ENCODE measurements at regions of chr6 and their contacts with region 1.

Region 1: GRCh38 chr6:169701954-169702839 is at the starts of genes C6orf120 and WDR27:
- DNase-seq: peak; percentile 95 to 98 (median 96)
- H3K4me3 ChIP-seq: peak within 1 kb of the TSS; percentile 95
- H3K4me3 Mint-ChIP-seq: peak within 1 kb of the TSS; percentile 88 to 96 (median 93)
- H3K27ac ChIP-seq: peak within 1 kb of the TSS; percentile 97
- H3K27ac Mint-ChIP-seq: peak within 1 kb of the TSS; percentile 94 to 97 (median 96)
- H3K4me1 ChIP-seq: peaks cover 46% of the 10 kb centered on the region
- H3K4me1 Mint-ChIP-seq: peaks cover 49 to 58% (median 55%) of the 10 kb centered on the region in 3 donors
- H3K27me3 ChIP-seq: no peaks in the 10 kb centered on the region
- H3K27me3 Mint-ChIP-seq: peaks cover 0 to 2% of the 10 kb centered on the region in 2 donors
- total RNA-seq, gene C6orf120: 23.6 to 25.5 TPM
- total RNA-seq, gene WDR27: 24.5 to 29.4 TPM

Region 2: GRCh38 chr6:169604076-169604475 is 98.1 kb before region 1 on chr6:
- CTCF ChIA-PET with region 1: no interaction called
- POLR2A ChIA-PET with region 1: no interaction called
- DNase-seq: no peak
- H3K4me3 ChIP-seq: no peak overlapping the region
- H3K4me3 Mint-ChIP-seq: no peak overlapping the region
- H3K27ac ChIP-seq: no peak overlapping the region
- H3K27ac Mint-ChIP-seq: no peak overlapping the region
- H3K4me1 ChIP-seq: no peaks in the 10 kb centered on the region
- H3K4me1 Mint-ChIP-seq: no peaks in the 10 kb centered on the region
- H3K27me3 ChIP-seq: no peaks in the 10 kb centered on the region
- H3K27me3 Mint-ChIP-seq: peaks cover 0 to 2% of the 10 kb centered on the region in 2 donors

Region 3: GRCh38 chr6:169723200-169723909 is 21.2 kb after region 1 on chr6:
- CTCF ChIA-PET with region 1: interaction called, 12 read pairs
- POLR2A ChIA-PET with region 1: interaction called, 69 read pairs
- DNase-seq: peak; percentile 54 to 82 (median 75)
- H3K4me3 ChIP-seq: peak overlapping the region; percentile 75
- H3K4me3 Mint-ChIP-seq: peak overlapping the region; percentile 87 to 99 (median 90)
- H3K27ac ChIP-seq: peak overlapping the region; percentile 81
- H3K27ac Mint-ChIP-seq: peak overlapping the region; percentile 90 to 99 (median 94)
- H3K4me1 ChIP-seq: peaks cover 42% of the 10 kb centered on the region
- H3K4me1 Mint-ChIP-seq: peaks cover 42 to 64% (median 56%) of the 10 kb centered on the region in 3 donors
- H3K27me3 ChIP-seq: no peaks in the 10 kb centered on the region
- H3K27me3 Mint-ChIP-seq: no peaks in the 10 kb centered on the region

Region 4: GRCh38 chr6:169738204-169738975 is 36.2 kb after region 1 on chr6:
- CTCF ChIA-PET with region 1: no interaction called
- POLR2A ChIA-PET with region 1: no interaction called
- DNase-seq: no peak
- H3K4me3 ChIP-seq: no peak overlapping the region
- H3K4me3 Mint-ChIP-seq: no peak overlapping the region
- H3K27ac ChIP-seq: no peak overlapping the region
- H3K27ac Mint-ChIP-seq: peak overlapping the region in 1 of 8 donors; percentile 14
- H3K4me1 ChIP-seq: no peaks in the 10 kb centered on the region
- H3K4me1 Mint-ChIP-seq: no peaks in the 10 kb centered on the region
- H3K27me3 ChIP-seq: no peaks in the 10 kb centered on the region
- H3K27me3 Mint-ChIP-seq: peaks cover 6 to 20% of the 10 kb centered on the region in 2 donors

Region 5: GRCh38 chr6:169751242-169752073 is 49.3 kb after region 1 on chr6 and contains the starts of genes DYNLT2 and ERMARD:
- CTCF ChIA-PET with region 1: interaction called, 3 read pairs
- POLR2A ChIA-PET with region 1: interaction called, 16 read pairs
- DNase-seq: peak; percentile 87 to 96 (median 94)
- H3K4me3 ChIP-seq: peak within 1 kb of the TSS; percentile 63
- H3K4me3 Mint-ChIP-seq: peak within 1 kb of the TSS; percentile 97 to 100 (median 99)
- H3K27ac ChIP-seq: peak within 1 kb of the TSS; percentile 93
- H3K27ac Mint-ChIP-seq: peak within 1 kb of the TSS; percentile 97 to 100 (median 100)
- H3K4me1 ChIP-seq: peaks cover 27% of the 10 kb centered on the region
- H3K4me1 Mint-ChIP-seq: peaks cover 34 to 38% (median 35%) of the 10 kb centered on the region in 3 donors
- H3K27me3 ChIP-seq: no peaks in the 10 kb centered on the region
- H3K27me3 Mint-ChIP-seq: no peaks in the 10 kb centered on the region
- total RNA-seq, gene DYNLT2: 1.4 to 1.9 TPM
- total RNA-seq, gene ERMARD: 26.2 to 27.9 TPM

Region 6: GRCh38 chr6:170554013-170554795 is 852.0 kb after region 1 on chr6 and contains the start of gene TBP:
- CTCF ChIA-PET with region 1: interaction called, 3 read pairs
- POLR2A ChIA-PET with region 1: interaction called, 11 read pairs
- DNase-seq: peak; percentile 94 to 98 (median 97)
- H3K4me3 ChIP-seq: peak within 1 kb of the TSS; percentile 78
- H3K4me3 Mint-ChIP-seq: no peak within 1 kb of the TSS
- H3K27ac ChIP-seq: peak within 1 kb of the TSS; percentile 93
- H3K27ac Mint-ChIP-seq: no peak within 1 kb of the TSS
- H3K4me1 ChIP-seq: peaks cover 39% of the 10 kb centered on the region
- H3K4me1 Mint-ChIP-seq: peaks cover 13 to 31% (median 23%) of the 10 kb centered on the region in 3 donors
- H3K27me3 ChIP-seq: no peaks in the 10 kb centered on the region
- H3K27me3 Mint-ChIP-seq: no peaks in the 10 kb centered on the region
- total RNA-seq, gene TBP: 26.0 to 28.2 TPM